Activated CD4-positive, alpha-beta memory T cell treated with anti-CD3 and anti-CD28 coated beads for 36 hours (primary cell): ENCODE measurements at regions of chr2 and their contacts with region 1.

Region 1: GRCh38 chr2:10408649-10409579 is 39.2 kb downstream of the ODC1 start:
- DNase-seq: peak; percentile 90
- H3K4me3 Mint-ChIP-seq: peak overlapping the region; percentile 60
- H3K27ac Mint-ChIP-seq: peak overlapping the region; percentile 95
- H3K4me1 Mint-ChIP-seq: peaks cover 45% of the 10 kb centered on the region
- H3K27me3 Mint-ChIP-seq: no peaks in the 10 kb centered on the region

Region 2: DNA sequence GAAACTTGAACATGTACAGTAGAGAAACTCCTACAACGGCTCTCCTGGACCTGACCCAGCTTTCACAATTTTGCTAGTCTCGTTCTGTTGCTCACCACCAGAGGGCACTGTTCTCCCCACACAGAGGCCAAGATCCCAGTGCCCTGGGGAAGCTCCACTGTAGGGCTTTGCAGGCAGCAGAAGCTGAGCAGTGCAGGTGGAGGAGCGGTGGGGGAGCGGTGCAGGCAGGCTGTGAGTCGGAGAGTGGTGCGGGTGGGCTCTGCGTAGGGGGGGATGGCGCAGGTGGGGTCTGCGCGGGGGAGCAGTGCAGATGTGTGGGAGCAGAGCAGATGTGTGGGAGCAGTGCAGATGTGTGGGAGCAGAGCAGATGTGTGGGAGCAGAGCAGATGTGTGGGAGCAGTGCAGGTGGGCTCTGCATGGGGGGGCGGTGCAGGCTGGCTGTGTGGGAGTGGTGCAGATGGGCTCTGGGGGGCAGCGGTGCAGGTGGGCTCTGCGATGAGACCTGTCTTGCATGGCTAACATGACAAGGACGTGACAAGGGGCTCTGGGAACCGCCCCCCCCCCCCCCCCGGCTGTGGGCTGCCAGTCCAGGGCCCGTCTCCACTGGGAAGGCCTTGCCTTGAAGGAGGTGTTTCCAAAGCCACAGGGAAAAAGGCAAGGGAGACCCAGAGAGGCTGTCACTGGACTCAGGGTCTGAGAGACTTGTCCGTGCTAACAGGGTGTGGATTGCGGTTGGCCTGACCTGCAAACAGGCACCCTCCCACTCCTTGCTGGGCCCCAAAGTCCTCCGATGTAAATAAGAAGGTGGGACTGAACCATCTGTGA is 336.0 kb before region 1 on chr2:
- CTCF ChIA-PET with region 1: interaction called, 60 read pairs
- POLR2A ChIA-PET with region 1: interaction called, 3 read pairs
- intact Hi-C with region 1: loop called (anchors 1 kb)
- DNase-seq: peak; percentile 86
- H3K4me3 Mint-ChIP-seq: no peak overlapping the region
- H3K27ac Mint-ChIP-seq: no peak overlapping the region
- H3K4me1 Mint-ChIP-seq: peaks cover 4% of the 10 kb centered on the region
- H3K27me3 Mint-ChIP-seq: peaks cover 37% of the 10 kb centered on the region

Region 3: GRCh38 chr2:10135296-10136089 is 273.4 kb before region 1 on chr2:
- CTCF ChIA-PET with region 1: interaction called, 73 read pairs
- POLR2A ChIA-PET with region 1: interaction called, 3 read pairs
- intact Hi-C with region 1: no loop called
- DNase-seq: no peak
- H3K4me3 Mint-ChIP-seq: no peak overlapping the region
- H3K27ac Mint-ChIP-seq: no peak overlapping the region
- H3K4me1 Mint-ChIP-seq: peaks cover 11% of the 10 kb centered on the region
- H3K27me3 Mint-ChIP-seq: no peaks in the 10 kb centered on the region

Region 4: GRCh38 chr2:10269711-10270610 is 139.0 kb before region 1 on chr2:
- CTCF ChIA-PET with region 1: interaction called, 37 read pairs
- POLR2A ChIA-PET with region 1: no interaction called
- intact Hi-C with region 1: loop called (anchors 1 kb)
- DNase-seq: no peak
- H3K4me3 Mint-ChIP-seq: no peak overlapping the region
- H3K27ac Mint-ChIP-seq: no peak overlapping the region
- H3K4me1 Mint-ChIP-seq: peaks cover 10% of the 10 kb centered on the region
- H3K27me3 Mint-ChIP-seq: no peaks in the 10 kb centered on the region

Region 5: DNA sequence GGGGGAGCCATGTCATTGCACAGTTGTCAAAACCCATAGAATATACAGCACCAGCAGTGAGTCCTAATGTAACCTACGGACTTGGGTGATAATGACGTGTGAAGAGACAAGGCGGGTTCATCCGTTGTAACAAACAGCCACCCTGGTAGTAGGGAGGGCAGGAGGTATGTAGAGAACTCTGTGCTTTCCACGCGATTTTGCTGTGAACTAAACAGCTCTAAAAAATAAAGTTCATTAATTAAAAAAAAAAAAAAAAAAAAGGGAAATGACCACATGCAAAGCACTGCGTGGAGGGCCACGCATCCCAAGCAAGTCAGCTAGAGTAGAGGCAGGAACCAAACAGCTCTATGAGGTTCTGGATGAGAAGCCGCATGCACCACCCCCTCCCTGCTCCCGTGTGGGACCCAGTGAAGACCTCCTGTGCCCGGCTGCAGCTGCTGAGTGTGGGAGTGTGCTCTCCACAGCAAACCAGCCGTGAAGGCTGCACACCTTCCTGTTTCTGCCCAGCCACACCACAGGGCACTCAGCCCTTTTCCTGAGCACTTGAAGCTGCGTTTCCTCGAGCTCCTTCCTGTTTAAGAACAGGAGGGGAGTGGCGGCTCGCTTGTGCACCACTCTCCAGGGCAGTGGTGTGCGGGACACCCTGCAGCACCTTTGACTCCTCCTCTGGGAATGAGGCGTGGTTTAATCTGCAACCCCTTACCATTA is 26.4 kb before region 1 on chr2:
- CTCF ChIA-PET with region 1: interaction called, 25 read pairs
- POLR2A ChIA-PET with region 1: interaction called, 5 read pairs
- intact Hi-C with region 1: loop called (anchors 1 kb)
- DNase-seq: peak; percentile 52
- H3K4me3 Mint-ChIP-seq: peak overlapping the region; percentile 27
- H3K27ac Mint-ChIP-seq: no peak overlapping the region
- H3K4me1 Mint-ChIP-seq: peaks cover 89% of the 10 kb centered on the region
- H3K27me3 Mint-ChIP-seq: no peaks in the 10 kb centered on the region

Region 6: GRCh38 chr2:10448208-10448645 is 39.3 kb after region 1 on chr2 and contains the start of gene ODC1:
- CTCF ChIA-PET with region 1: interaction called, 22 read pairs
- POLR2A ChIA-PET with region 1: interaction called, 7 read pairs
- intact Hi-C with region 1: loop called (anchors 1 kb)
- DNase-seq: peak; percentile 95
- H3K4me3 Mint-ChIP-seq: peak within 1 kb of the TSS; percentile 83
- H3K27ac Mint-ChIP-seq: peak within 1 kb of the TSS; percentile 88
- H3K4me1 Mint-ChIP-seq: peaks cover 50% of the 10 kb centered on the region
- H3K27me3 Mint-ChIP-seq: no peaks in the 10 kb centered on the region
- total RNA-seq, gene ODC1: 138 to 142 TPM

Region 7: DNA sequence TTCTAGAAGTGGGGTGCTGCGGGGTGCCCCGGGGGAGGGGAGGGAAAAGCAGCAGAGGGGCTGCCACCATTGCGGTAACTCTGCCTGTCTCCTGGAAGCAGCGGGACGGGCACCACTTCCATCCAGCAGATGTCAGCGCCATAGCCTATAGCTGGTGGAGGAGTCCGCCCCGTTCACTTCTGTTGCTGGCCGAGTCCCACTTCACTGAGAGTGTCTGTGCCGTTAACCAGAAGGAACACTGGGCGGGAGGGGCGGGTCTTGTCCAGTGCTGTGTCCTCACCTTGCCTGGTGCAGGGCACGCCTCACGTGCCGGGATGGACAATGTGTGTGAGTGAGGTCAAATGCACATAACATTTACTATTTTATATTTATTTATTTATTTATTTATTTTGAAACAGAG is 58.5 kb after region 1 on chr2:
- CTCF ChIA-PET with region 1: no interaction called
- POLR2A ChIA-PET with region 1: no interaction called
- intact Hi-C with region 1: no loop called
- DNase-seq: no peak
- H3K4me3 Mint-ChIP-seq: no peak overlapping the region
- H3K27ac Mint-ChIP-seq: no peak overlapping the region
- H3K4me1 Mint-ChIP-seq: no peaks in the 10 kb centered on the region
- H3K27me3 Mint-ChIP-seq: peaks cover 3% of the 10 kb centered on the region